ENCODE measurements at regions of chr12 and their contacts with region 1.

Region 1: DNA sequence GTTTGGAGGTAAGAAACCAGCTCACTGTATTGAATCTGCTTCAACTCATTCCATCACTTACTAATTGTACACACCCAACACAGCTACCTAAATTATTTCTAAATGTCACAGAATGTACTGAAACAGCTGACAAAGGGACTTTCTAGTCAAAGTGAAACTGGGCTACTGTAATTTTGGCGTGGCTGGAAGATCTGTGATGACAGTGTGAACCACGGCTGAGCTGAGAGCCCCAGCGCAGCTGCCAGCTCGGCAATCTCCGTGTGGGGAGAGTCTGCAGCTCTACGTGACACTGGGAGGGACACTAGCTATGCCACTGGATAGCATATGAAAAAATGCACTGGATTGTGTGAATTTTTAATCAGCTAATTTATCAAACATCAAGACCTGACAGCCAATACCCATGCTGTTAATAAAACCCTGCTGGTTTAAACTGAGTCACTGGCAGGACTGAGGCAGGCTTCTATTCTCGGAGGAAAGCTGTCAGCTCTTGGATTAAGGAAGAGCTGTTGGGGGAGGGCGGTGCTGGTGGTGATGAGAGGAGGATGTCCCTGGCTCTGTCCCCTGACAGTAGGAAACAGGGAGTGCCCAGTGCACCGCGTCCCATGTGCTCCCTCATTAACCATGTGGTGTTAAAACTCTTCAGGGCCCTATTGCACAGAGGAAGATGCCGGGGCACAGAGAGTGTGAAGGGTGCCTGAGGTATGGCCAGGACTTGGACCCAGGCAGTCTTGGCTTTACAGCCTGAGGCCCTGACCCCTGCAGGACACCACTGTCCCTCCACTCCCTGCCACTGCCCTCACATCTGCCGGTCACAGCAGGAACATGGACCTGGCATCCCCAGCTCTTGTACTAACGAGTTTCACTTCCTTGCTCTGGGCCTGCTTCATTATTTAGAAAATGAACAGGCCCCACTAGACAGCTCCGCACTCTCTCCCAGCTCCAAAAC is 13.3 kb downstream of the SLC15A4 start:
- DNase-seq: peak; percentile 67 to 79
- ATAC-seq: peak; percentile 54
- H3K4me3 ChIP-seq: no peak overlapping the region
- H3K27ac ChIP-seq: peak overlapping the region; percentile 55 to 73
- H3K4me1 ChIP-seq: peaks cover 5 to 8% of the 10 kb centered on the region in 2 donors
- H3K27me3 ChIP-seq: no peaks in the 10 kb centered on the region

Region 2: GRCh38 chr12:128627659-128628058 is 182.8 kb before region 1 on chr12:
- intact Hi-C with region 1: no loop called
- DNase-seq: no peak
- ATAC-seq: no peak
- H3K4me3 ChIP-seq: no peak overlapping the region
- H3K27ac ChIP-seq: no peak overlapping the region
- H3K4me1 ChIP-seq: no peaks in the 10 kb centered on the region
- H3K27me3 ChIP-seq: no peaks in the 10 kb centered on the region

Region 3: DNA sequence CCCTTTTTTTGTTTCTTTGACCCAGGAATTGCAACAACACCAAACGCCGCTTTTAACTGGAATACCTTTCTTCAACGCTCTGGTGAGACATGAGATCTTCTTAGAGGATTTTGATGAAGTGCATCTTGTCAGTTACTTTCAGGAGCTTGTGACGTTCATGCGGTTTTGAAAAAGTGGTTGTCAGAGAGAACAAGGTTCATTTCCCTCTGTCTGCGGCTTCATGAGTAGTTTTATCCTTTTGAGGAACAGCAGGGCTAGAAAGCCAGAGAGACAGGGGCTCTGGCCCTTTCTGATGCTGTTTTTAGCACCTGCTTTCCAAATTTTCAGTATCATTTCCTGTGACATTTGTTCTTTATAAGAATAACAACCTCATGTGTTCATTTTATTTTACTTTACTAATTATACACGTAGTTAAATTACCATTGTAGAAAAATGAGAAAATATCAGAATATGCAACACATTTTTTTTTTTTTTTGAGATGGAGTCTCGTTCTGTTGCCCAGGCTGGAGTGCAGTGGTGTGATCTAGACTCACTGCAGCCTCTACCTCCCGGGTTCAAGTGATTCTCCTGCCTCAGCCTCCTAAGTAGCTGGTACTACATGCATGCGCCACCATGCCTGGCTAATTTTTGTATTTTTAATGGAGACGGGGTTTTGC is 104.6 kb after region 1 on chr12:
- intact Hi-C with region 1: loop called in 1 of 2 experiments (anchors 5 kb)
- DNase-seq: no peak
- ATAC-seq: no peak
- H3K4me3 ChIP-seq: no peak overlapping the region
- H3K27ac ChIP-seq: no peak overlapping the region
- H3K4me1 ChIP-seq: no peaks in the 10 kb centered on the region
- H3K27me3 ChIP-seq: no peaks in the 10 kb centered on the region